Activated CD8-positive, alpha-beta T cell treated with anti-CD3 and anti-CD28 coated beads for 36 hours (primary cell): ENCODE measurements at regions of chr2 and their contacts with region 1.

Region 1: GRCh38 chr2:27683390-27684071 is 19.8 kb downstream of the SLC4A1AP start:
- DNase-seq: peak; percentile 98
- ATAC-seq: peak; percentile 84
- H3K4me3 Mint-ChIP-seq: no peak overlapping the region
- H3K27ac Mint-ChIP-seq: peak overlapping the region; percentile 79
- H3K4me1 Mint-ChIP-seq: peaks cover 34% of the 10 kb centered on the region
- H3K27me3 Mint-ChIP-seq: no peaks in the 10 kb centered on the region
- CTCF ChIP-seq: peak; percentile 100

Region 2: DNA sequence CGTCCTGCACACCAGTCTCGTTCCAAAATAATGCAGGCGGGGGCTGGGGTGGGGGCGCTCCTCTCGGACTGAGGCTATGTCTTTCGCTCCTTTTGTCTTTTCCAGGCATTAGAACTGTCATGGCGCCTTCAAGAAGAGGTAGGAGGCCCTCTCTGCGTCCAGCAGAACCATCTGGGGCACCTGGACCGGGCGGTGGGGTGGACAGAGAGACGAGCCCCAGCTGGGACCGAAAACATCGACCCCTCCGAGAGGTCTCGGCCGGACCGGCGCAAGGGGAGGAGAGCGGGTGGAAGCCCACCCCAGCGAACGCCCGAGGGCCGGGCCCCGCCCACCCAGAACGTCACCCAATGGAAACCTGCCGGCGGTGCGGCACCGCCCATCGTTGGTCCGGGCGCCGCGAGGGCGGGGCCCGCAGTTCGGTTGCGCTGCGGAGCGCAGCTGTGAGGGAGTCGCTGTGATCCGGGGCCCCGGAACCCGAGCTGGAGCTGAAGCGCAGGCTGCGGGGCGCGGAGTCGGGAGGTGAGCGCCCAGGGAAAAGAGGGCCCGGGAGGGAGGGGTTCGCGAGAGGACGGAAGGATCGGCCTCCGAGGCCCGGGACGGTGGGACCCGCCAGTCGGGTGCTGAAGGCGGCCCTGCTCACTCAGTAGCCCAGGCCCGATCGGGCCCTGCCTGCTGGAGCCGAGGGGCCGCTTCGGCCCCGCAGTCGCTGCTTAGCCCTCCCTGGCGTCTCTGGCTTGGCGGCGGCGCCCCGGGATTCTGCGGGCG is 255.1 kb before region 1 on chr2 and contains the start of gene NRBP1:
- CTCF ChIA-PET with region 1: interaction called, 31 read pairs
- POLR2A ChIA-PET with region 1: no interaction called
- intact Hi-C with region 1: no loop called
- DNase-seq: peak; percentile 93
- ATAC-seq: peak; percentile 87
- H3K4me3 Mint-ChIP-seq: peak within 1 kb of the TSS; percentile 98
- H3K27ac Mint-ChIP-seq: peak within 1 kb of the TSS; percentile 97
- H3K4me1 Mint-ChIP-seq: peaks cover 21% of the 10 kb centered on the region
- H3K27me3 Mint-ChIP-seq: no peaks in the 10 kb centered on the region
- CTCF ChIP-seq: no peak
- total RNA-seq, gene NRBP1: 60.5 to 62.1 TPM

Region 3: DNA sequence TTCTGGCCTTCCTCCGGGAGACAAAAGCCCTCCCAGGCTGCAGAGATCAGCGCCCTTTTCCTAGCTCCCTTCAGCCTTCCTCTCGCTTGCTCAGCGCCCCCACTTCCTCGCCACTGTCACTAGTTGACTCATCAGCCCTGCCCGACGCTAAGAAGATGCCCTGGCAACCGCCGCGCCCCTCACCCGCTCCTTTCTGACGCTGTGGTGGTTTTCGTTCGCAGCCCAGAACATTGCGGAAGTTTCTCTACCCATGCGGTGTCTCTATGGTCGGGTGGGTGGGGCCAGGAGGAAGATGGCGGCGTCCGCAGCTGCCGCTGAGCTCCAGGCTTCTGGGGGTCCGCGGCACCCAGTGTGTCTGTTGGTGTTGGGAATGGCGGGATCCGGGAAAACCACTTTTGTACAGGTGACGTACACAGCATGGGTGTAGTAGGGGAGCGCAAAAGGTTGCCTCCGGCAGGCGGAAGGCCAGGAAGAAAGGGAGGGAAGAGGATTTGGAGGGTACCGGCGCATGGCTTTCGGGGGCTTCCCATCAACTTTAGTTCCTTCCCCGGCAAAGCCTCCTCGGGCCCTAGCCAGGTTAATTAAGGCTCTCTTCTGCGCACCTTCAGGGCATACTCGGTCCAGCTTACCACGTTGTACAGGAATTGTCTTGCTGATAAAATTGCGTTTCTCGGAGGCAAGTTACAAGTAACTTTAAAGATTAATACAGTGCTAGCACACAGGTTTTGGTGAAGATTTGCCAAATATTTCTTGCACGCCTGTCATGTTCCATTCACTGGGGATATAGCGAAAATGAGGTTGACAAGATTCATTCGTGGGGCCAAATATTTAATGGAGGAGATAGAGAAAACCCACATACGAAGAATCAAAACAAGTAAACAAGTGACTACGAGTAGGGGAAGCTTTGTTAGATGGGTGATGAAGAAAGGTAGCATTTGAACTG is 54.5 kb before region 1 on chr2 and contains the starts of genes CCDC121 and GPN1:
- CTCF ChIA-PET with region 1: interaction called, 29 read pairs
- POLR2A ChIA-PET with region 1: interaction called, 4 read pairs
- intact Hi-C with region 1: no loop called
- DNase-seq: peak; percentile 98
- ATAC-seq: peak; percentile 97
- H3K4me3 Mint-ChIP-seq: no peak within 1 kb of the TSS
- H3K27ac Mint-ChIP-seq: no peak within 1 kb of the TSS
- H3K4me1 Mint-ChIP-seq: peaks cover 28% of the 10 kb centered on the region
- H3K27me3 Mint-ChIP-seq: no peaks in the 10 kb centered on the region
- CTCF ChIP-seq: no peak
- total RNA-seq, gene CCDC121: 0.40 to 0.43 TPM
- total RNA-seq, gene GPN1: 37.6 to 41.2 TPM

Region 4: GRCh38 chr2:27647289-27647688 is 36.2 kb before region 1 on chr2:
- CTCF ChIA-PET with region 1: interaction called, 18 read pairs
- POLR2A ChIA-PET with region 1: interaction called, 4 read pairs
- intact Hi-C with region 1: no loop called
- DNase-seq: no peak
- ATAC-seq: no peak
- H3K4me3 Mint-ChIP-seq: no peak overlapping the region
- H3K27ac Mint-ChIP-seq: no peak overlapping the region
- H3K4me1 Mint-ChIP-seq: no peaks in the 10 kb centered on the region
- H3K27me3 Mint-ChIP-seq: no peaks in the 10 kb centered on the region
- CTCF ChIP-seq: no peak

Region 5: GRCh38 chr2:27663463-27664249 is 19.9 kb before region 1 on chr2 and contains the starts of genes SLC4A1AP and SUPT7L:
- CTCF ChIA-PET with region 1: interaction called, 58 read pairs
- POLR2A ChIA-PET with region 1: interaction called, 11 read pairs
- intact Hi-C with region 1: no loop called
- DNase-seq: peak; percentile 81
- ATAC-seq: peak; percentile 82
- H3K4me3 Mint-ChIP-seq: peak within 1 kb of the TSS; percentile 93
- H3K27ac Mint-ChIP-seq: peak within 1 kb of the TSS; percentile 100
- H3K4me1 Mint-ChIP-seq: peaks cover 50% of the 10 kb centered on the region
- H3K27me3 Mint-ChIP-seq: no peaks in the 10 kb centered on the region
- CTCF ChIP-seq: no peak
- total RNA-seq, gene SLC4A1AP: 19.1 to 19.3 TPM
- total RNA-seq, gene SUPT7L: 21.8 to 22.6 TPM

Region 6: DNA sequence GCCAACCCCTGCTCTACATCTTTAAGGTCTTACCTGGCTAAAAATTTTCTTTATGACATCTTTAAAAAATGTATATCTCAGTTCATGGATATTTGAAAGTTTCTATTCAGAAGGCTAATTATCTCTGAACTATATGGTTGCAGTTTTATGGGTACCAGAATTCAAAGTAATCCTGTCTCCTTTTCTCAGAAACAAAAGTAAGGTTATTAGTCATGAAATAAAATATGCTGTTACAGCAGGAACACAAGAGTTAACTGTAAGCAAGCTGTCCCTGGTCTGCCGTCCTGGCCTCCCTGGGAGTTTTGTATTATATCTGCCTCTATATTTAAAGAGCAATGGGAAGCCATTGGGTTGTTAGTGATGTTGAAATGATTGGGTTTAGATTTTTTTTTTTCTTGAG is 14.1 kb after region 1 on chr2:
- CTCF ChIA-PET with region 1: interaction called, 64 read pairs
- POLR2A ChIA-PET with region 1: no interaction called
- intact Hi-C with region 1: no loop called
- DNase-seq: no peak
- ATAC-seq: no peak
- H3K4me3 Mint-ChIP-seq: no peak overlapping the region
- H3K27ac Mint-ChIP-seq: no peak overlapping the region
- H3K4me1 Mint-ChIP-seq: peaks cover 3% of the 10 kb centered on the region
- H3K27me3 Mint-ChIP-seq: no peaks in the 10 kb centered on the region
- CTCF ChIP-seq: no peak

Region 7: DNA sequence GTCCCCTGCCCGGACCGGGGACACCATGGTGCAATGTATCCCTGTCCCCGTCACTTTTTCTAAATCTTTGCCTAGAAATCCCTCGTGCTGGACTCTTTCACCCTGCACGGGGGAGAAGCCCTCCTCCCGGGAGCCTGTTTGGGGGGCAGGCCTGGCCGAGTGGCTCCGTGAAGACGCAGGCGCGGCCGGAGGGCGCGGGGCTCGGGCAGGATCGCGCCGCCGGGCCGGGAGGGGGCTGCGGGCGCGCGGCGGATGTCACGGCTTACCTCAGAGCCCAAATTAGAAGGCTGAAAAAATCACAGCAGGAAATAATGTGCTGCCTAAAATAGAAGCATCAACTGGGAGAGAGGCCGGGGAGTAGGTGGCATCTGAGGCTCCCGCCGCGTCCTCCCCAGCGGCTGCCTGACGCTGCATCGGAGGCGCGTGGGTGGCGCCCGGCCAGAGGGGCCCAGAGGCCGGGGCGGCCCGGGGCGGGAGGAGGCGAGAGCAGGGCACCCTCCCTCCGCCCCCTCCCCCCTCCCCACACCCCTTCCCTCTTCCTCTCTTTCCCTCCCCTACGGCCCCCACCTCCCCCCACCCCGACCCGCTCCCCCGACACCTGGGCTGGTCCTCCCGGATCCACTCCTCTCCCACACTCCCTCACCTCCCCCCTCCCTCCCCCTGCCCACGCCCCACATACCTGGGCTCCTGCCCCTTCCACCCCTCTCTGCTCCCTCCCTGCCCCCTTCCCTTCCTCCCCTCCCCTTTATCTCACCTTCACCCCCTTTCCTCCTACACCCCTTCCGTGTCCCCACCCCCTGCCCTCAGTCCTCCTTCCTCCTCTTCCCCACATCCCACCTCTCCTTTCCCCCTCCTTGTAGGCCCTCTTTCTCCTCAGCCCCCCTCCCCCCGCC is 32.0 kb after region 1 on chr2:
- CTCF ChIA-PET with region 1: interaction called, 25 read pairs
- POLR2A ChIA-PET with region 1: no interaction called
- intact Hi-C with region 1: no loop called
- DNase-seq: peak; percentile 70
- ATAC-seq: peak; percentile 43
- H3K4me3 Mint-ChIP-seq: peak overlapping the region; percentile 29
- H3K27ac Mint-ChIP-seq: no peak overlapping the region
- H3K4me1 Mint-ChIP-seq: peaks cover 46% of the 10 kb centered on the region
- H3K27me3 Mint-ChIP-seq: peaks cover 15% of the 10 kb centered on the region
- CTCF ChIP-seq: no peak